Sigmoid colon (tissue), 7 donors: ENCODE measurements at regions of chr4 and their contacts with region 1.

Region 1: GRCh38 chr4:70651864-70652506 is 14.3 kb downstream of the JCHAIN start:
- DNase-seq: no peak
- H3K4me3 ChIP-seq: no peak overlapping the region
- H3K27ac ChIP-seq: no peak overlapping the region
- H3K4me1 ChIP-seq: peaks cover 0 to 4% (median 0%) of the 10 kb centered on the region in 4 donors
- H3K27me3 ChIP-seq: no peaks in the 10 kb centered on the region
- CTCF ChIP-seq: peak in 3 of 4 experiments; percentile 37 to 53 (median 51)
- EP300 ChIP-seq: no peak
- POLR2A ChIP-seq: no peak

Region 2: GRCh38 chr4:70687821-70688794 is 36.1 kb after region 1 on chr4 and contains the start of gene UTP3:
- intact Hi-C with region 1: loop called (anchors 5 kb)
- DNase-seq: peak; percentile 98
- H3K4me3 ChIP-seq: peak within 1 kb of the TSS; percentile 66 to 94 (median 79)
- H3K27ac ChIP-seq: peak within 1 kb of the TSS; percentile 93 to 95 (median 94)
- H3K4me1 ChIP-seq: peaks cover 0 to 35% (median 32%) of the 10 kb centered on the region in 4 donors
- H3K27me3 ChIP-seq: no peaks in the 10 kb centered on the region
- CTCF ChIP-seq: peak; percentile 78 to 95 (median 92)
- EP300 ChIP-seq: peak in 2 of 4 donors; percentile 25 to 50
- POLR2A ChIP-seq: peak; percentile 44 to 58
- total RNA-seq, gene UTP3: 15.3 to 19.7 (median 15.6) TPM

Region 3: DNA sequence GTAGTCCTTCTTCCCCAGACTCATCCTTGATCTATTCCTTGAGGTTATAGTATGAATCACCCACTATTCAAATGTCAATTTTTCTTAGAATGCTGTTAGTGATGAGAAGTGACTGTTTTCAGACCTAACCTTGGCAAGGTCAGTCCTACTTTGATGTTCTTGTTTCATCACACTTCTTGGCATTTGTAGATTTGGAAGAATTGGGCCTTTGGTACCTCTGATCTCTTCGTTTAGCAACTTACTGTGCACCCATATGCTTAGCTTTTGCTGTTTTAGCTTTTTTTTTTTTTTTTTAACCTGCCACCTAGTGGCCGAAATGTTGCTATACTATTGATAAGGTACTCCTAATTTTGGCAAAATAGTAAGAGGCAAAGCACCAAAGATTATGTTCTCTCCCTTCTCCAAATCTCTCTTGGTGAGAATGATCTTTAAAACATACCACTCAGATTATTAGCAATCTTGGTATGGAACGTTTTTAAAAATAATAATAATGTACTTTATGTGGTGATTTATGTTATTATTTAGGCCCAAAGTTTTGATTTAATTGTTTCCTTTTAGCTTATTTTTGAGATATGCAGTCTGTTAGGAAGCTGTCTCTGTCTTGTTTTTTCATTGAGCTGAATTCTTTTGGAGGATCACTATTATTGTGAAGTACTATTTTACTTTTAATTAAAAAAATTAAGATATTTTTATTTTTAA is 358.1 kb after region 1 on chr4:
- intact Hi-C with region 1: loop called (anchors 5 kb)
- DNase-seq: no peak
- H3K4me3 ChIP-seq: no peak overlapping the region
- H3K27ac ChIP-seq: no peak overlapping the region
- H3K4me1 ChIP-seq: no peaks in the 10 kb centered on the region
- H3K27me3 ChIP-seq: no peaks in the 10 kb centered on the region
- CTCF ChIP-seq: peak; percentile 24 to 52 (median 40)
- EP300 ChIP-seq: no peak
- POLR2A ChIP-seq: no peak

Region 4: GRCh38 chr4:71430609-71431008 is 778.6 kb after region 1 on chr4:
- intact Hi-C with region 1: no loop called
- DNase-seq: no peak
- H3K4me3 ChIP-seq: no peak overlapping the region
- H3K27ac ChIP-seq: no peak overlapping the region
- H3K4me1 ChIP-seq: no peaks in the 10 kb centered on the region
- H3K27me3 ChIP-seq: no peaks in the 10 kb centered on the region
- CTCF ChIP-seq: no peak
- EP300 ChIP-seq: no peak
- POLR2A ChIP-seq: no peak

Region 5: DNA sequence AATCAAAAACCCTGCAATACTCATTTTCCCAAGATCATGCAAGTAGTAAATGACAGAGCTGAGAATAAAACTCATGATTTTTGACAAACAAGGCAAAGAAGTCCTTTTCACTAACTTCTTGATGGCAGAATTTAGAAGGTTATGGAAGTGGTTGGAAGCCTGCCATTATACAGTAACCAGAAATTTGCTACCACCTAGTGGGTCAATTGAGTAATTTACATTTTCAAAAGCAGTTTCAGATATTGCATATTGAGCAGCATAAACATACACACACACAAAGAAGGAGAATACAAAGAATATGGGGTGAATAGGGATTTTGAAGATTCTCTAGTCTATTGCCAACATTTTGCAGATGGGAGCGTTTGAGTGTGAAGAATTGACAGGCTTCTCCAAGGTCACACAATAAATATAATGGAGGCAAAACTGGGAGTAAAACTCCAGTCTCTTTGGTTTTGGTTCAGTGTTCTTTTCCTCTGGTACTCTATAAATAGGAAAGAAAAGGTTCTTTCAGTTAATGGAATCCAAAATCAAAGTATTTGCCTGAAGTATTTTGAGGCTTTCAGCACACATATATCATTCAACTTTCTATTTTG is 1061.7 kb after region 1 on chr4:
- intact Hi-C with region 1: loop called (anchors 10 kb)
- DNase-seq: no peak
- H3K4me3 ChIP-seq: no peak overlapping the region
- H3K27ac ChIP-seq: no peak overlapping the region
- H3K4me1 ChIP-seq: no peaks in the 10 kb centered on the region
- H3K27me3 ChIP-seq: no peaks in the 10 kb centered on the region
- CTCF ChIP-seq: peak in 3 of 4 experiments; percentile 50 to 57 (median 51)
- EP300 ChIP-seq: no peak
- POLR2A ChIP-seq: no peak